Activated B cell treated with CpG ODN at 0.5 μM for 24 hours (primary cell): ENCODE measurements at regions of chrX and their contacts with region 1.

Region 1: GRCh38 chrX:130165703-130166502 is at the start of gene AIFM1:
- DNase-seq: peak; percentile 74
- ATAC-seq: peak; percentile 88
- H3K4me3 Mint-ChIP-seq: peak within 1 kb of the TSS; percentile 93
- H3K27ac Mint-ChIP-seq: peak within 1 kb of the TSS; percentile 95
- H3K4me1 Mint-ChIP-seq: peaks cover 27% of the 10 kb centered on the region
- H3K27me3 Mint-ChIP-seq: no peaks in the 10 kb centered on the region
- CTCF ChIP-seq: no peak
- total RNA-seq, gene AIFM1: 30.8 and 34.3 TPM in 2 replicates

Region 2: GRCh38 chrX:129931411-129932015 is 234.4 kb before region 1 on chrX:
- CTCF ChIA-PET with region 1: no interaction called
- POLR2A ChIA-PET with region 1: no interaction called
- intact Hi-C with region 1: loop called (anchors 2 kb)
- DNase-seq: peak; percentile 59
- ATAC-seq: peak; percentile 70
- H3K4me3 Mint-ChIP-seq: peak overlapping the region; percentile 86
- H3K27ac Mint-ChIP-seq: peak overlapping the region; percentile 90
- H3K4me1 Mint-ChIP-seq: peaks cover 5% of the 10 kb centered on the region
- H3K27me3 Mint-ChIP-seq: no peaks in the 10 kb centered on the region
- CTCF ChIP-seq: no peak

Region 3: DNA sequence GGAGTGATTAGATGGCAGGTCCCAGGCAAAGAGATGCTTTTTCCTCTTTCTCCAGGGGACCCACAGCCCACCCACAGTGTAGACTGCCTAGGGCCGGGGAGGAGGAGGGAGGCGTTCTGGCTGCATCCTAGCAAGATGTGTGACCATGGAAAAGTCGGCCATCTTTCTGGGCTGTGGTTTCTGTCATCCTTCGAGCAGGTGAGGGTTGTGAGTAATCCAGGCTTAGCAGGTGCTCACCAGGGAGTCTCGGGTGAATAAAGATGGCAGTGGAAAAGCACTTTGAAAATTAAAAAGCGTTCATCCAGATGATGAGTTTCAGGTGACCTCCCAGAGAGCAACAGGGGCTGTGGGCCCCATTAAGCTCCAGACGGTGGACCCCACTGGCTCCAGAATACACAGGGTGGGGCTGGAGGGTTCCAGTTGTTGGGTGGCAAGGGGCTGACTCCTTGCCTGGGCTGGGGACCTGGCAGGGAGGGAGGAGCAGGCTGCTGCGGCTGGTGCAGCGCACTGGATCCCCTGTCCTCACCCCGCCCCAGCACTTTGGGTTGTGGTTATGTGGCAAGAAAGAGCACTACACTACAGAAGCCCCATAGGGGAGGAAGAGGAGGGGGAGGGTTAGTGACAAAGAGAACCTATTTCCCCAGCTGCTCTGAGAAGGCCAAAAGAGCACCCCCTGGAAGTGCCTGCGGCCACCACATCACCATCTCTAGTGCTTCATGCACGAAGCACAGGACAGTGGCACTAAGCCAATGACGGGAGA is 79.3 kb before region 1 on chrX:
- CTCF ChIA-PET with region 1: no interaction called
- POLR2A ChIA-PET with region 1: interaction called, 6 read pairs
- intact Hi-C with region 1: loop called (anchors 2 kb)
- DNase-seq: no peak
- ATAC-seq: peak; percentile 38
- H3K4me3 Mint-ChIP-seq: peak overlapping the region; percentile 62
- H3K27ac Mint-ChIP-seq: peak overlapping the region; percentile 89
- H3K4me1 Mint-ChIP-seq: peaks cover 78% of the 10 kb centered on the region
- H3K27me3 Mint-ChIP-seq: no peaks in the 10 kb centered on the region
- CTCF ChIP-seq: no peak

Region 4: DNA sequence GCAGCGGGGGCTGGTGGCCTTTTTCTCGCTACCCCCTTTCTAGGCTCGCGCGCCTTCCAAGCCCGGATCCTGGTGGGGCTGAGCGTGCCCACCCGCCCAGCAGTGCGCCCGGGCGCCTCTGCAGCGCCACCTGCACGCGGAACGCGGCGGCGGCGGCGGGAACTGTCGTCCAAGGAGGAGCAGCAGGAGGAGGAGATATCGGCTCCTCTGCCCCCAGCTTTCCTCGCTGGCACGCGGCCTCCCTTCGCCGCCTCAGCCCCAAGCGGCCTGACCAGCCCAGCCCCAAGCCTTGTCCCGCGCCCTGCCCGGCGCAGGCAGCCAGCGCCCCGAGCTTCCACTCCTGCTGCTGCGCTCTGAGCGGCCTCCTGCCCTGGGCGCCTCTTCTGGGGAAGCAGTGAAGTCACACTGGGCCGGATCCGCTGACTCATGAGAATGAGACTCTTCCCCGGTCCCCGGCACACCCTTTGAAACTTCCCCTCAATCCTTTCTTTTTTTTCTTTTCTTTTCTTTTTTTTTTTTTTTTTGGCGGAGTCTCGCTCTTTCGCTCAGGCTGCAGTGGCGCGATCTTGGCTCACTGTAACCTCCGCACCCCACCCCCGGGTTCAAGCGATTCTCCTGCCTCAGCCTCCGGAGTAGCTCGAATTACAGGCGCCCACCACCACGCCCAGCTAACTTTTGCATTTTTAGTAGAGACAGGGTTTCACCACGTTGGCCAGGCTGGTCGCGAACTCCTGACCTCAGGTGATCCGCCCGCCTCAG is 45.0 kb before region 1 on chrX:
- CTCF ChIA-PET with region 1: interaction called, 3 read pairs
- POLR2A ChIA-PET with region 1: interaction called, 4 read pairs
- intact Hi-C with region 1: loop called (anchors 2 kb)
- DNase-seq: peak; percentile 64
- ATAC-seq: peak; percentile 83
- H3K4me3 Mint-ChIP-seq: peak overlapping the region; percentile 76
- H3K27ac Mint-ChIP-seq: peak overlapping the region; percentile 53
- H3K4me1 Mint-ChIP-seq: peaks cover 18% of the 10 kb centered on the region
- H3K27me3 Mint-ChIP-seq: no peaks in the 10 kb centered on the region
- CTCF ChIP-seq: no peak

Region 5: GRCh38 chrX:130196466-130196865 is 30.6 kb after region 1 on chrX:
- CTCF ChIA-PET with region 1: no interaction called
- POLR2A ChIA-PET with region 1: no interaction called
- intact Hi-C with region 1: loop called (anchors 1 kb)
- DNase-seq: no peak
- ATAC-seq: no peak
- H3K4me3 Mint-ChIP-seq: no peak overlapping the region
- H3K27ac Mint-ChIP-seq: no peak overlapping the region
- H3K4me1 Mint-ChIP-seq: peaks cover 7% of the 10 kb centered on the region
- H3K27me3 Mint-ChIP-seq: no peaks in the 10 kb centered on the region
- CTCF ChIP-seq: no peak